ENCODE measurements at regions of chr19 and their contacts with region 1.

Region 1: DNA sequence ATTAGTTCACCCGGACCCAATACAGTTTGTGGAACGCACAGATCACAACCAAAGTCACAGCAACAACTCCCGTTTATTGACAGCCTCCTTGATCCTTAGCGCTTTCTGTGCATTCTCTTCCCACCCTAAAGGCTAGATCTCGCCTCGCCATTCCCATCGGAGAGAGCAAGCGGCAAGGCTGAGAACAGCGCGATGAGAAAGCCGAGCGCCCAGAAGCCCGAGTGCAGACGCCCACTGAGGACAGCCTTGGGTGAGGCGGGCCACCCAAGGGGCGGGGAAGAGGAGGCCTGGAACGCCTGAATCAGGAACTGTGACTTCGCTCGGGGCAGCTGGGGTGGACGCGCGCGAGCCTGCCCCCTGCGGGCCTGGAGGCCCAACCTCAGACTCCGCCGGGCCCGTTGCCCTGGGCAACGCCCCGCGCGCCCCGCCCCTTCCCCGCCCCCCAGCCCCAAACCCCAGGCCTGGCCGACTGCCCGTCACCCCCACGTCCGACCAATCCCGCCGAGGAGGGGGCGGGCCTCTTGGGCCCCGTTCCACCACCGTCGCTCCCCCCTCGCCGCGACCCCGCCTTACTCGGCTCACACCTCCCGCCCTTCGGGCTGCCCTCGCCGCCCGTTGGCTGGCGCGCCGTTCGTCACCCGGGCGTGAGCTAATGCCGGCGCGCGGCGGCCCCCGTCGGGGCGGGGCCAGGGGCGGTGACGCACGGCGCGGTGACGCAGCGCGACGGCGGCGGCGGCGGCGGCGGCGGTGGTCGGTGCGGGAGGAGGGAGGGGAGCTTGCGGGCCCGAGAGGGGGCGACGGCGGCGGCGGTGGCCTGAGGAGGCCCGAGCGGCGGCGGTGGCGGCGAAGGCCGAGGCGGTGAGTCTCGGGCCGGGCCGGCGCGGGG is at the start of gene SAMD4B:
- DNase-seq: peak; percentile 91 to 99
- H3K4me3 ChIP-seq: peak within 1 kb of the TSS; percentile 97
- H3K27ac ChIP-seq: peak within 1 kb of the TSS; percentile 90 to 91
- H3K4me1 ChIP-seq: peaks cover 11 to 36% of the 10 kb centered on the region in 2 donors
- H3K27me3 ChIP-seq: no peaks in the 10 kb centered on the region
- CTCF ChIP-seq: peak; percentile 77 to 91 (median 82)
- total RNA-seq, gene SAMD4B: 358 TPM

Region 2: GRCh38 chr19:38387550-38388348 is 954.2 kb before region 1 on chr19 and contains the start of gene GGN:
- intact Hi-C with region 1: loop called (anchors 5 kb)
- DNase-seq: peak; percentile 75 to 95
- H3K4me3 ChIP-seq: peak within 1 kb of the TSS; percentile 58 to 94
- H3K27ac ChIP-seq: peak within 1 kb of the TSS; percentile 91 to 97
- H3K4me1 ChIP-seq: peaks cover 6 to 20% of the 10 kb centered on the region in 2 donors
- H3K27me3 ChIP-seq: no peaks in the 10 kb centered on the region
- CTCF ChIP-seq: no peak
- total RNA-seq, gene GGN: 46.9 TPM

Region 3: GRCh38 chr19:38975214-38975860 is 366.6 kb before region 1 on chr19 and contains the start of gene FBXO17:
- intact Hi-C with region 1: loop called (anchors 5 kb)
- DNase-seq: peak in 1 of 2 donors; percentile 75
- H3K4me3 ChIP-seq: peak within 1 kb of the TSS; percentile 75 to 88
- H3K27ac ChIP-seq: peak within 1 kb of the TSS; percentile 91 to 94
- H3K4me1 ChIP-seq: peaks cover 0 to 11% of the 10 kb centered on the region in 2 donors
- H3K27me3 ChIP-seq: no peaks in the 10 kb centered on the region
- CTCF ChIP-seq: no peak
- total RNA-seq, gene FBXO17: 47.4 TPM

Region 4: GRCh38 chr19:39372047-39372802 is 30.3 kb after region 1 on chr19:
- intact Hi-C with region 1: loop called (anchors 2 kb)
- DNase-seq: peak; percentile 41 to 93
- H3K4me3 ChIP-seq: peak overlapping the region; percentile 20 to 33
- H3K27ac ChIP-seq: peak overlapping the region; percentile 96
- H3K4me1 ChIP-seq: peaks cover 15 to 24% of the 10 kb centered on the region in 2 donors
- H3K27me3 ChIP-seq: no peaks in the 10 kb centered on the region
- CTCF ChIP-seq: no peak

Region 5: DNA sequence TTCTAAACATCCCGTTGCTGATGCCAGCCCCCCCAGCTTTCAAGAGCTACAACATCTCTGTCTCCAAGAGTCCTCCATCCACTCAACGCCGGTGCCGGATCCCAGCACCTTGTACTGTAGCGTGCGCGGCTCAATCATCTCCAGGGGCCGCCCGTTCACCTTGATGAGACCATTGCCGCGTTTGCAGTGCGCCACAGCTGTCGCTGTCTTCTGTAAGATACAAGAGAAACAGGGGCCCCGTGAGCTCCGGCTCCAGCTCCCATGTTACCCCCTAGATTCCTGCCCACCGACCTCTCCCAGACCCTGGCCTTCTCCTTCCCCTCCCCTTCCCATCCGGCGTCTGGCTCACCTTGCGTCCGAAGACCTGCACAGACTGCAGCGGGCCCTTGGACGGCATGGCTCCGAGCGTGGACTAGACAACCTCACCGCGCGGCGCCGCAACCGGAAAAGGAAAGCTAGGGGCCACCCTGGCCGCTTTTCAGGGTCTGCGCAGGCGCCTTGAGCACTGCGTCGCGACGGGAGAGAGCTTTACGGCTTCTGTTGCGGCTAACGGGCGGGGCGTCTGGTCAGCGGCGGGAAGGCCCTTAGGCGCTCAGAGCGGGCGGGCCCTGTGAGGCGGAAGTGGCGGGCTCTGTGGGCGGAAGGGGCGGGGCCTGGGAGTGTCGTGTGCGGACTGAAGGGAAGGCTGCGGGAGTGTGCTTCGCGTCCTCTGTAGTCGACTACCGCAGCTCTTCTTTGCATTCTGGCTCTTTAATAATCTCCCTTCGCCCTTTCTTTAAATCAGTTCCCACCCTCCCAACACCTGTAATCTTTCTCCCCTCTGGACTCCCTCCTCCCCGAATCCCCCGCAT is 93.8 kb after region 1 on chr19 and contains the start of gene RPS16:
- intact Hi-C with region 1: loop called (anchors 2 kb)
- DNase-seq: peak; percentile 92 to 99
- H3K4me3 ChIP-seq: peak within 1 kb of the TSS; percentile 72 to 82
- H3K27ac ChIP-seq: peak within 1 kb of the TSS; percentile 72 to 85
- H3K4me1 ChIP-seq: peaks cover 10 to 23% of the 10 kb centered on the region in 2 donors
- H3K27me3 ChIP-seq: no peaks in the 10 kb centered on the region
- CTCF ChIP-seq: no peak
- total RNA-seq, gene RPS16: 1,453 TPM

Region 6: DNA sequence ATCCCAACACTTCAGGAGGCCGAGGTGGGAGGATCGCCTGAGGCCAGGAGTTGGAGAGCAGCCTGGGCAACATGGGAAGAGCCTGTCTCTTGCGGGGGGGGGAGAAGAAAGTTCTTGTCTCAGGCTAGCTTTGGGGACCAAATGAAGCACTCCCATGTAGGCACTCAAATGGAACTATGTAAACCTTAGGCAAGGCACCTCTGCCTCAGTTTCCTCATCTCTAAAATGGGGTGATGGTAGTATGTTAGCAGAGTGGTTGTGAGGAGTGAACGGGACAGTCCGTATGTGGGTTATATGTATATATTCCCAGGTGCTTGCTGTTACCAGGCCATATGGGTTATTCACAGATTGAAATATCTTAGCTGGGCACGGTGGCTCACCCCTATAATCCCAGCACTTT is 150.3 kb after region 1 on chr19:
- intact Hi-C with region 1: no loop called
- DNase-seq: no peak
- H3K4me3 ChIP-seq: no peak overlapping the region
- H3K27ac ChIP-seq: no peak overlapping the region
- H3K4me1 ChIP-seq: no peaks in the 10 kb centered on the region
- H3K27me3 ChIP-seq: no peaks in the 10 kb centered on the region
- CTCF ChIP-seq: no peak

Region 7: DNA sequence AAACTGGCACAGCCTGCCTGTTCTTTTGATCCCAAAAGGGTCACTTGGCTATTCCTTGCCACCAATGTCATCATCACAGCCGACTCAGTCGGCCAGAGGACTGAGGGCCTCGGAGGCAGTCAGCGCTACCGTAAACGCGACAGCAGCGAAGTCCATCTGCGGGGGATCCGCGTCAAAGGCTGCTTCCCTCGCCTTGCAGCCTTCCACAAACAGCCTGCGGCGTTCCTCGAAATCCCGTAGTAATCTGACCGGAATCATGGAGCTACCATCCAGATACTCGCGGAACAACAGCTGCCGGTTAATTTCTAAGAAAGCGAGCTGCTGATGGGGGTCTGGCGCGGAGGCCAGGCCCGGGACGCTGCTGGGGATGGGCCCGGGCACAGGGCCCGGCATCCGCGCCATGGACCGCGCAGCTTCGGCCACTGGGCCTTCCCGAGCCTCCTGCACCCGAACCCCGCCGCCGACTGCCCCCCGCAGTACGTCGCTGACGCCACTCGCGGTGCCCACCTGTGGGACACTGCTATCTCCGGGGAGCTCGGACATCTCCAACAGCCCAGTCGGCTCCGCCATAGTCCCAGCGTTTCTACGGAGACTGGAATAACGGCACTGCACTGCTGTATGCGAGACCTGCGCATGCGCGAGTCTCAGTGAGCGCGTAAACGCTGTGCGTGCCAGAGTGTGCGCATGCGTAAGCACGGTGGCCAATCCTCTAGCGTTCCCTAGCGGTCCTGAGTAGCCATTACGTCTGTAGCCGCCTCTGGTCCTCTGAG is 190.5 kb after region 1 on chr19 and contains the start of gene EID2B:
- intact Hi-C with region 1: loop called (anchors 5 kb)
- DNase-seq: peak; percentile 76 to 97
- H3K4me3 ChIP-seq: peak within 1 kb of the TSS; percentile 86 to 91
- H3K27ac ChIP-seq: peak within 1 kb of the TSS; percentile 74 to 84
- H3K4me1 ChIP-seq: peaks cover 6 to 11% of the 10 kb centered on the region in 2 donors
- H3K27me3 ChIP-seq: no peaks in the 10 kb centered on the region
- CTCF ChIP-seq: peak; percentile 96 to 99 (median 97)
- total RNA-seq, gene EID2B: not detected